IMR-90 (cell line): ENCODE measurements at regions of chr4 and their contacts with region 1.

Region 1: DNA sequence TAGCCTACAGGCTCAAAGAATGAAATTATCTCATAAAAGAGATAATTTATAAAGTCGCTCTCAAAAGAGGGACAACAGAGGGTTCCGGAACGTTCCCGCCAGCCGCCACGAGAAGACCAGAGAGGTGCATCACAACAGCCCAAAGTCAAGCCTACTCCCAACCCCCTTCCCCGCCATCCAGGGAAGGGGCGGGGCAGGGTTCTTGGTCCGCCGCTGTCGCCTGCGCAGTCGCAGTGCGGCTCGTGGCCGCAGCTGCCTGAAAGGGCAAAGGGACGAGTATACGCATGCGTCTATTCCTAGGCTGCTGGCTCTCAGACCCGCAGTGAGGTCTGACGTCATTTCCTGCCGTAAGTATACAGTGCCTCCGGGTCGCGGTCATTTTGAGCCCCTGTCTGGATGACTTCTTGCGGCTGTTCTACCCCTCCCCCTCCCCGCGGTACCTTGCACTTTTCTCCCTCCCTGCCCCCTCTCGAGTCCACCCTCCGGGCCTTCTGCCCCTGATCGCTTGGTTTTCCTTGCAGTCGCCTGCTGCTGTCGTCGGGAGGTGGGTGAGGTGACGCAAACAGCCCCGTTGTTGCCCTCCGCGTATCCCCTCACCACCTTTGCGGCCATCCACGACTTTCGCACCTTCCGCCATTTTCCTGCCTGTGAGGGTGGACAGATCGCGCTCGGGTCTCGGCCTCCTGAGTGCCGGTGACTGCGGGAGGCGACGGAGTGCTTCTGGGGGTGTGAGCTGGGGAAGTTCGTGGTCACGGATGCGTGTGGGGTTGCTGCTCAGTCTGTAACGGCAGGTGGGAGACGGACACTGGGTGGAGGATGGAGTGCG is at the start of gene OCIAD1:
- DNase-seq: peak; percentile 100
- ATAC-seq: peak; percentile 98
- H3K4me3 ChIP-seq: peak within 1 kb of the TSS; percentile 76
- H3K27ac ChIP-seq: peak within 1 kb of the TSS; percentile 98
- H3K4me1 ChIP-seq: no peaks in the 10 kb centered on the region
- H3K27me3 ChIP-seq: no peaks in the 10 kb centered on the region
- CTCF ChIP-seq: no peak
- POLR2A ChIP-seq: peak; percentile 71
- RAD21 ChIP-seq: no peak
- total RNA-seq, gene OCIAD1: 86.9 and 106 TPM in 2 replicates

Region 2: GRCh38 chr4:48570646-48571220 is 260.2 kb before region 1 on chr4:
- CTCF ChIA-PET with region 1: no interaction called
- POLR2A ChIA-PET with region 1: no interaction called
- dilution Hi-C with region 1: no loop called
- in situ Hi-C with region 1: loop called (anchors 25 kb)
- intact Hi-C with region 1: loop called (anchors 5 kb)
- DNase-seq: peak; percentile 76
- ATAC-seq: peak; percentile 94
- H3K4me3 ChIP-seq: no peak overlapping the region
- H3K27ac ChIP-seq: no peak overlapping the region
- H3K4me1 ChIP-seq: no peaks in the 10 kb centered on the region; the same call in 1 of the 2 replicates
- H3K27me3 ChIP-seq: no peaks in the 10 kb centered on the region
- CTCF ChIP-seq: no peak
- POLR2A ChIP-seq: no peak
- RAD21 ChIP-seq: no peak

Region 3: DNA sequence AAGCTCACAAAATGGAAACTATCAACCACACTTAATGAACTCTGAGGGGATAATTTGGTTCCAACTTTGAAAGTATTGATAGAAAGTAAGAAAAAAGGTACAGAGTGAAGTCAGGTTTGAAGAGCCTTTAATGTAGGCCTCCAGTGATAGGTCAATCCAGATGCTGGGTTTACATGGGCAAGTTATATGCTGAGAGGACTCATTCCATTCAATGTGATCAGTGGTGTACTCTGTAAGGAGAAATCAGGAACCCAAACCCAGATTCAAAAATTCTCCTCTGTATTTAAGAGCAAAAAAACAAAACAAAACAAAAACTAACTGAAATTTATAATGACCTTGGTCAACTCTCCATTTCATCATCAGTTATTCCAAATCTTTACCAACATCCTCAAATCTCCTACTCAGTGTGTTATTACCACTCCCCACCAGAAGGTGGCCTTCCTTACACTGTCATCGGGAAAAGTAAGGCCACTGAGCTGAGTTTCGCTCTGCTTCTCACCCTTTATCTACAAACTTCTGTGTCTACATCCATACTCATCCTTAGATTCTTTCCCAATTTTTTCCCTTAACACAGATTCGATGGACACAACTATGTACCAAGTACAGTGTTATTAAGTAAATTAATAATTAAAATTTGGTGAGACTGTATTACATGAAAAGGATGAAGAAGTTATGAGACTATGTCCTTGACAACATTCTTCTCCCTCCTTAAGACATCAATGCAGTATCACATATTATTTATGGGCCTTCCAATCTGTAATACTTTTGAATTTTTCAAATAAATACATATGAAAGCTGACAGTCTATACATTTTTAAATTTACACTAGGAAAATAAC is 252.6 kb before region 1 on chr4:
- CTCF ChIA-PET with region 1: no interaction called
- POLR2A ChIA-PET with region 1: no interaction called
- dilution Hi-C with region 1: no loop called
- in situ Hi-C with region 1: loop called (anchors 25 kb)
- intact Hi-C with region 1: loop called (anchors 5 kb)
- DNase-seq: peak; percentile 78
- ATAC-seq: peak; percentile 99
- H3K4me3 ChIP-seq: no peak overlapping the region
- H3K27ac ChIP-seq: no peak overlapping the region
- H3K4me1 ChIP-seq: no peaks in the 10 kb centered on the region
- H3K27me3 ChIP-seq: no peaks in the 10 kb centered on the region
- CTCF ChIP-seq: peak; percentile 87
- POLR2A ChIP-seq: no peak
- RAD21 ChIP-seq: peak; percentile 86

Region 4: GRCh38 chr4:48739560-48740019 is 91.3 kb before region 1 on chr4:
- CTCF ChIA-PET with region 1: no interaction called
- POLR2A ChIA-PET with region 1: no interaction called
- dilution Hi-C with region 1: no loop called
- in situ Hi-C with region 1: loop called (anchors 25 kb)
- intact Hi-C with region 1: no loop called
- DNase-seq: no peak
- ATAC-seq: no peak
- H3K4me3 ChIP-seq: no peak overlapping the region
- H3K27ac ChIP-seq: no peak overlapping the region
- H3K4me1 ChIP-seq: 0 out of 2 replicates have a peak, but pooled peaks cover 1% of the 10 kb centered on the region
- H3K27me3 ChIP-seq: no peaks in the 10 kb centered on the region
- CTCF ChIP-seq: no peak
- POLR2A ChIP-seq: no peak
- RAD21 ChIP-seq: no peak